Activated CD8-positive, alpha-beta T cell treated with anti-CD3 and anti-CD28 coated beads, Interleukin-2, amount 10 ng/mL, durations not matched to agents 7 days and 5 days (primary cell): ENCODE measurements at regions of chr6 and their contacts with region 1.

Region 1: DNA sequence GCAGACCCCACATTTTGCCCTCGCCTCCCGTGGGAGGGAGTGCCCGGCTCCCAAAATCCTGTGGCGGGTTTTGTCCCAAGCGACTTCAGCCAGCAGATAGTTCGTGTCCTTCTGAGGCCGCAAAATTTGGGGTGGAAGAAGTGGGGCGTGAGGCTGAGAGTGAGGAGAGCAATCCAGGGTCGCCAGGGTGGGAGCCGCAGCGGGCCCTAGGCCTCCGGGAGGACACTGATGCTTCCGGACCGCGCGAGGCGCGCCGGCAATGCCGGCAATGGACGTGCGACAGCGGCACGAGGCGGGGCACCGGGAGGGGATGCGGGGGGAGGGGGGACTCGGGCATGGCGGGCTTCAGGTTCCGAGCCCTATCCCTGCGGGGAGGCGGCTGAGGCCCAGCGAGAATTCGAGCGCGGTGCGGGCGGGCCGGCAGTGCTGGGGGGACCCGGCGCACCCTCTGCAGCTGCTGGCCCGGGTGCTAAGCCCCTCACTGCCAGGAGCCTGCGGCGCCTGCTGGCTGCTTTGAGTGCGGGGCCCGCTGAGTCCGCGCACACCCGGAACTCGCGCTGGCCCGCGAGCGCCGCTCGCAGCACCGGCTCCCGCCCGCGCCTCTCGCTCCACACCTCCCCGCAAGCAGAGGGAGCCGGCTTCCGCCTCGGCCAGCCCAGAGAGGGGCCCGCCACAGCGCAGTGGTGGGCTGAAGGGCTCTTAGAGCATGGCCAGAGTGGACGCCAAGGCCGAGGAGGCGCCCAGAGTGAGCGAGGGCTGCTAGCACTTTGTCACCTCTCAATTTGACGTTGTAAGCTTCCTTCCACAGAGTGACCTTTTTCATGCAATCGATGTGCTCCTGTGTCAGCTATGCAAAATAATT is 143.8 kb downstream of the LPA start:
- DNase-seq: peak; percentile 81
- ATAC-seq: peak; percentile 90
- H3K4me3 Mint-ChIP-seq: peak overlapping the region; percentile 94
- H3K27ac Mint-ChIP-seq: peak overlapping the region; percentile 95
- H3K4me1 Mint-ChIP-seq: peaks cover 25% of the 10 kb centered on the region
- H3K27me3 Mint-ChIP-seq: peaks cover 32% of the 10 kb centered on the region

Region 2: GRCh38 chr6:160462551-160463109 is 57.6 kb before region 1 on chr6:
- CTCF ChIA-PET with region 1: interaction called, 18 read pairs
- POLR2A ChIA-PET with region 1: interaction called, 4 read pairs
- DNase-seq: peak; percentile 90
- ATAC-seq: peak; percentile 85
- H3K4me3 Mint-ChIP-seq: peak overlapping the region; percentile 25
- H3K27ac Mint-ChIP-seq: peak overlapping the region; percentile 73
- H3K4me1 Mint-ChIP-seq: peaks cover 68% of the 10 kb centered on the region
- H3K27me3 Mint-ChIP-seq: peaks cover 34% of the 10 kb centered on the region

Region 3: DNA sequence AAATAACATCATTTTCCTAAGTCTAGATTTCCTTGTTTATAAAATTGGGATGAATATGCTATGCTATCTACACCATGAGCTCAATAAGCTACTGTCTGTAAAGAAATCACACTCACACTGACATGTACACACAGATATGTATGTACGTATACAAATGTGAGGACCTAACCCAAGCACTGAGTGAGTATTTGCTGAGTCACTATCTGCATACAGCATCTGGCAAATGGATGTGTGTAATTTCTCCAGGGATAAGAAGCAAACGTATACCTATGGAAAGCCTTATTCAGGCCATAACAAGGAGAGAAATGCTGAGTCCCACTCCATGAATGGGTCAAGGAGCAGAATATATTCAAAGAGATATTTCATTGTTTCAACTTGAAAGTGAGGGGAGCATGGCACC is 10.1 kb before region 1 on chr6:
- CTCF ChIA-PET with region 1: interaction called, 12 read pairs
- POLR2A ChIA-PET with region 1: no interaction called
- DNase-seq: no peak
- ATAC-seq: no peak
- H3K4me3 Mint-ChIP-seq: no peak overlapping the region
- H3K27ac Mint-ChIP-seq: no peak overlapping the region
- H3K4me1 Mint-ChIP-seq: peaks cover 2% of the 10 kb centered on the region
- H3K27me3 Mint-ChIP-seq: peaks cover 36% of the 10 kb centered on the region